PC-9 (cell line): ENCODE measurements at regions of chr5 and their contacts with region 1.

Region 1: DNA sequence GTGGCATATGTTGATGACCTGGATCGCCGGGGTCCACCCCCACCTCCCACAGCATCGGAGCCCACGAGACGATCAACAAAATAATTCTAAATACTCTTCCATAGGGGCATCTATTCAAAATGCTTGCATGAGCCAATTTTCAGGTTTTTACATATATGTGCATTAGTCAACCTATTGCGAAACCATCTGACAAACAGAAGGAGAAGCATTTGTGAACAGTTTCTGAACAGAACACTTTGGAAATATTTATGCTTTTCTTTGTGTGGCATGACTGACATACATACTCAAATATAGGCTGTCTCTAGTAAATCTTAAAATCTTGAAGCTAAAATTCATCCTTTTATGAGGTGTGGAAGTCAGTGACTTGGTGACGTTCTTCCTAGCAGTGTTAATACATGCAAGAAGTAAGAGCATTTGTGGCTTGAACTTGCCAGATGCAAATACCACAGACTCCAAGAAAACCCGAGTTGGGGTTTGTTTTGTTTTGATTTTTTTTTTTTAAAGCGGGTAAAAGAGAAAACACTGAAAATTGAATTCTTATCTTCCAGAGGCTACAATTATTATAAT is 5.3 kb downstream of the GPR151 start:
- DNase-seq: no peak
- H3K4me3 ChIP-seq: no peak overlapping the region
- H3K27ac ChIP-seq: no peak overlapping the region
- H3K4me1 ChIP-seq: no peaks in the 10 kb centered on the region
- H3K27me3 ChIP-seq: no peaks in the 10 kb centered on the region
- CTCF ChIP-seq: no peak

Region 2: GRCh38 chr5:146475190-146475801 is 35.3 kb before region 1 on chr5:
- CTCF ChIA-PET with region 1: no interaction called
- POLR2A ChIA-PET with region 1: no interaction called
- intact Hi-C with region 1: loop called (anchors 5 kb)
- DNase-seq: no peak
- H3K4me3 ChIP-seq: no peak overlapping the region
- H3K27ac ChIP-seq: no peak overlapping the region
- H3K4me1 ChIP-seq: no peaks in the 10 kb centered on the region
- H3K27me3 ChIP-seq: no peaks in the 10 kb centered on the region
- CTCF ChIP-seq: peak; percentile 39; the same call in 1 of the 2 replicates